Activated CD4-positive, alpha-beta T cell treated with anti-CD3 and anti-CD28 coated beads, Interleukin-2, amount 10 ng/mL, durations not matched to agents 7 days and 5 days (primary cell): ENCODE measurements at regions of chr16 and their contacts with region 1.

Region 1: DNA sequence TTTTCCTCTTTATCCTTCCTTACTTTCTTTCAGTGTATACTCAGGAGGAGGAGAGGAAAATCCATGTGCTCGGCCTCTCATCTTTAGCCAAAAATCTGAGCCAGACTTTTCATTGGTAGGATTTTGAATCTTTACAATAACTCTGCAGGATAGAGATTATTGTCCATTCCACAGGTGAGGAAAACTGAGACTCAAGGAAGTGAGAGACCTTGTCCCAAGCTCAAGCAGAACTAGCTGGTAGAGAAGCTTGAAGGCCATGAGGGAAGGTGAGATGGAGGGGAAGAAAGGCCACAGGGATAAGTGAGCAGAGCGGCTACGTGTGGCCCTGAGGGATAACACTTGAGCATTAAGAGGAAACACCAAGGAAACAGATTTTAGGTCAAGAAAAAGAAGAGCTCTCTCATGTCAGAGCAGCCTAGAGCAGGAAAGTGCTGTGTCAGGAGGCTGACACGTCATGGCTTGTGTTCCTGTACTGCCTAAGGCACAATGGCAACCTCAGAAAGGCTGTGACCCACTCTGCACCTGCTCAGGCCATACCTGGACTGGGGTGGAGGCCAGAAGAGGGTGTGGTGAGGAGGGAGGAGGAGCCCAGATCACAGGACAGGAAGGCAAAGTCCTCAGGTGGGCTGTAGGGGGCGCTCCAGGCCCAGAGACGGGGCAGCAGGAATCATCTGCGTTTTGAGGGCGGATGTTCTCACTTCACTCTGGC is 11.9 kb downstream of the MT4 start:
- DNase-seq: peak; percentile 91
- H3K4me3 Mint-ChIP-seq: no peak overlapping the region
- H3K27ac Mint-ChIP-seq: peak overlapping the region; percentile 78
- H3K4me1 Mint-ChIP-seq: peaks cover 9% of the 10 kb centered on the region
- H3K27me3 Mint-ChIP-seq: peaks cover 13% of the 10 kb centered on the region

Region 2: DNA sequence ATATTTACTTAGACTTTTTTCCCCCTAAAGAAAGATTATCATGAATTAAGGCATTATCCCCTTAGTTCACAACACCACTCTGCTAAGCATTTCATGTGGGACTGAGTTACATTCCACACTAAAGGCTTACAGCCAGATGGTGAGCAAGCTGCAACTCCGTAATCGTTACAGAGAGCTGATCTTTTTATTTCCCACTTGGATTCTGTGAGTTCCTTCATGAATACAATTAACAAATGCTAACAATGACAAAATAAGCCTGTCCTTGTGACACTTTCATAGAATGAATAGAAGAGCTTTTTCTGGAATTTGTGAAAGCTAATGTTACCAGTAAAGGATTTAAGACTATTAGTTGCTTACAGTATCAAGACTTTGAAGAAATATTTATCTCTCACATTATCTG is 116.6 kb before region 1 on chr16:
- CTCF ChIA-PET with region 1: no interaction called
- POLR2A ChIA-PET with region 1: no interaction called
- DNase-seq: no peak
- H3K4me3 Mint-ChIP-seq: no peak overlapping the region
- H3K27ac Mint-ChIP-seq: no peak overlapping the region
- H3K4me1 Mint-ChIP-seq: peaks cover 8% of the 10 kb centered on the region
- H3K27me3 Mint-ChIP-seq: no peaks in the 10 kb centered on the region

Region 3: GRCh38 chr16:56530872-56531271 is 45.9 kb before region 1 on chr16:
- CTCF ChIA-PET with region 1: no interaction called
- POLR2A ChIA-PET with region 1: no interaction called
- DNase-seq: no peak
- H3K4me3 Mint-ChIP-seq: no peak overlapping the region
- H3K27ac Mint-ChIP-seq: no peak overlapping the region
- H3K4me1 Mint-ChIP-seq: no peaks in the 10 kb centered on the region
- H3K27me3 Mint-ChIP-seq: peaks cover 25% of the 10 kb centered on the region

Region 4: GRCh38 chr16:56564773-56565477 is 11.8 kb before region 1 on chr16 and contains the start of gene MT4:
- CTCF ChIA-PET with region 1: interaction called, 17 read pairs
- POLR2A ChIA-PET with region 1: no interaction called
- DNase-seq: no peak
- H3K4me3 Mint-ChIP-seq: no peak within 1 kb of the TSS
- H3K27ac Mint-ChIP-seq: no peak within 1 kb of the TSS
- H3K4me1 Mint-ChIP-seq: peaks cover 4% of the 10 kb centered on the region
- H3K27me3 Mint-ChIP-seq: peaks cover 18% of the 10 kb centered on the region
- total RNA-seq, gene MT4: not detected

Region 5: GRCh38 chr16:56589141-56590039 is 12.7 kb after region 1 on chr16 and contains the start of gene MT3:
- CTCF ChIA-PET with region 1: interaction called, 9 read pairs
- POLR2A ChIA-PET with region 1: interaction called, 14 read pairs
- DNase-seq: peak; percentile 28
- H3K4me3 Mint-ChIP-seq: peak within 1 kb of the TSS; percentile 78
- H3K27ac Mint-ChIP-seq: peak within 1 kb of the TSS; percentile 69
- H3K4me1 Mint-ChIP-seq: peaks cover 14% of the 10 kb centered on the region
- H3K27me3 Mint-ChIP-seq: peaks cover 49% of the 10 kb centered on the region
- total RNA-seq, gene MT3: 3.0 to 3.8 TPM